Right ventricle myocardium superior (tissue), 1 donor: ENCODE measurements at regions of chr2 and their contacts with region 1.

Region 1: GRCh38 chr2:158968396-158969161 is at the start of gene TANC1:
- DNase-seq: peak; percentile 96
- ATAC-seq: peak; percentile 95
- total RNA-seq, gene TANC1: 56.2 TPM

Region 2: GRCh38 chr2:159035790-159036411 is 67.3 kb after region 1 on chr2:
- intact Hi-C with region 1: loop called (anchors 10 kb)
- DNase-seq: no peak
- ATAC-seq: peak; percentile 64